ENCODE measurements at regions of chr9 and their contacts with region 1.

Region 1: GRCh38 chr9:125650271-125650737 is 56.7 kb downstream of the MAPKAP1 start:
- DNase-seq: no peak
- H3K4me3 ChIP-seq: no peak overlapping the region
- H3K27ac ChIP-seq: peak overlapping the region in 1 of 4 donors; percentile 38
- H3K4me1 ChIP-seq: peaks cover 0 to 32% (median 22%) of the 10 kb centered on the region in 4 donors
- H3K27me3 ChIP-seq: no peaks in the 10 kb centered on the region
- CTCF ChIP-seq: no peak
- EP300 ChIP-seq: no peak
- POLR2A ChIP-seq: no peak

Region 2: GRCh38 chr9:125593585-125594229 is 56.6 kb before region 1 on chr9:
- intact Hi-C with region 1: no loop called
- DNase-seq: no peak
- H3K4me3 ChIP-seq: no peak overlapping the region
- H3K27ac ChIP-seq: no peak overlapping the region
- H3K4me1 ChIP-seq: peaks cover 0 to 5% (median 2%) of the 10 kb centered on the region in 4 donors
- H3K27me3 ChIP-seq: no peaks in the 10 kb centered on the region
- CTCF ChIP-seq: no peak
- EP300 ChIP-seq: no peak
- POLR2A ChIP-seq: no peak

Region 3: DNA sequence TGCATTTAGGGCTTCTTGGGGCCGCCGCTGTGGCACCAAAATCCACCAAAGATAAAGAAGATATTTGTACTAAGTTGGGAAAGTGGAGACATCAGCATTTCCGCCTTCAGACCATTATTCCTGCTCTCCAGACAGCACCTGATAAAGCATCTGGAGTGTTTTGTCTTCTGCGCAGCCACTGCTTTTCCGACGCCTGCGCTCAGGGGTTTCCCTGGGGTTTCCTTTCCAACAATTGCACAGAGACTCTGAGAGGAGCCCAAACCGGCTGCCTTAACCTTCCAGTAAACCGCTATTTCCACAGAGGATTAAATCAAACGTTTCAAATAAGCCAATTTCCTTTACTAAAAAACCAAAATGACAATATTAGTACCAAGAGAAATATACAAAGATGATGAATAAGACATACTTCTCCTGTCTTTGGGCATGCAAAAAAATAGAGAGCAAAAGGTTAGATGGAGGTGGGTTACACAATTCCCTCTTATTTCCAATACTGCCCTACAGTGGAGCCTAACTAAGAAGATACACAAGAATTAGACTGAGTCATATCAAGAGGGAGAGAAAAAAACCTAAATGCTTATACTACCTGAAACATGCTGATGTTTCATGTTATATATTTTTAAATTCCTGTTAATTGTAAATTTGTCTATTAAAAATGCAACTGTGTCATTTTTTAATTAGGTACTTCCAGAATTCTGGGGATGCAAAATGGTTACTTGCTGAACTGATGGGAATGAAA is 41.6 kb before region 1 on chr9:
- intact Hi-C with region 1: no loop called
- DNase-seq: no peak
- H3K4me3 ChIP-seq: no peak overlapping the region
- H3K27ac ChIP-seq: no peak overlapping the region
- H3K4me1 ChIP-seq: peaks cover 0 to 21% (median 10%) of the 10 kb centered on the region in 4 donors
- H3K27me3 ChIP-seq: no peaks in the 10 kb centered on the region
- CTCF ChIP-seq: no peak
- EP300 ChIP-seq: no peak
- POLR2A ChIP-seq: no peak

Region 4: DNA sequence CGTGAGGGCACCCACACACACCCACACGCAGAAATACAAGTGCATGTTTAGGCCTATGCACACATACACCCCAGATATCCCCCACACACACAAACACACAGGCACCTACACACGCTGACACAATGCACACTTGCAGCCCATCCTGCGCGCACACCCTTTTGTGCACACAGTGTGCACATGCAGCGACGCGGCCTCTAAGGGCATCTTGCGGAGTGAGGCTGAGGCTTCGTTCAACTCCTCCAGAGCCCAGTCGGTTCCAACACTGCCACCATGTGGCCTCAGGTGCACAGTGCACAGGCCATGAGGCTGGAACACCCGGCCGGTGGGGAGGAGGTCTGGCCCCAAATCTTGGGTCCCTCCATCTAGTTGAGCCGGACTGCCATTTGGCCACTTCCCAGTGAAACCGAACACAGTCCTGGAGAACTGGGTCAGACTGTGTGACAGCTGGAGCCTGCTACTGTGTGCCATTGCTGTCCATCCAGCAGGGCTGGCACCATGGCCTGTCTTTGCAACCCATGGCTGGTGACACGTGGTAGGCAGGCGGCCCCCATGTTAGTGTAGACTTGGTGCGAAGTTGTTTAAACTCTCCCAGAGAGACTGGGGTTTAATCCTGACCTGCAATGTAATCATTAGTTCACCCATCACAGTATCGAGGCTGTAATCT is 578.6 kb after region 1 on chr9:
- intact Hi-C with region 1: loop called (anchors 10 kb)
- DNase-seq: peak; percentile 84
- H3K4me3 ChIP-seq: no peak overlapping the region
- H3K27ac ChIP-seq: no peak overlapping the region
- H3K4me1 ChIP-seq: peaks cover 0 to 6% (median 0%) of the 10 kb centered on the region in 4 donors
- H3K27me3 ChIP-seq: peaks cover 0 to under 1% (median 0%) of the 10 kb centered on the region in 3 donors
- CTCF ChIP-seq: peak; percentile 87 to 98 (median 95)
- EP300 ChIP-seq: no peak
- POLR2A ChIP-seq: no peak

Region 5: GRCh38 chr9:126581893-126582292 is 931.6 kb after region 1 on chr9:
- intact Hi-C with region 1: no loop called
- DNase-seq: no peak
- H3K4me3 ChIP-seq: no peak overlapping the region
- H3K27ac ChIP-seq: no peak overlapping the region
- H3K4me1 ChIP-seq: peaks cover 0 to 2% (median under 1%) of the 10 kb centered on the region in 4 donors
- H3K27me3 ChIP-seq: peaks cover 0 to 22% (median 0%) of the 10 kb centered on the region in 3 donors
- CTCF ChIP-seq: no peak
- EP300 ChIP-seq: no peak
- POLR2A ChIP-seq: no peak

Measured in sigmoid colon (tissue), 7 donors.